ENCODE measurements at regions of chrX and their contacts with region 1.

Region 1: DNA sequence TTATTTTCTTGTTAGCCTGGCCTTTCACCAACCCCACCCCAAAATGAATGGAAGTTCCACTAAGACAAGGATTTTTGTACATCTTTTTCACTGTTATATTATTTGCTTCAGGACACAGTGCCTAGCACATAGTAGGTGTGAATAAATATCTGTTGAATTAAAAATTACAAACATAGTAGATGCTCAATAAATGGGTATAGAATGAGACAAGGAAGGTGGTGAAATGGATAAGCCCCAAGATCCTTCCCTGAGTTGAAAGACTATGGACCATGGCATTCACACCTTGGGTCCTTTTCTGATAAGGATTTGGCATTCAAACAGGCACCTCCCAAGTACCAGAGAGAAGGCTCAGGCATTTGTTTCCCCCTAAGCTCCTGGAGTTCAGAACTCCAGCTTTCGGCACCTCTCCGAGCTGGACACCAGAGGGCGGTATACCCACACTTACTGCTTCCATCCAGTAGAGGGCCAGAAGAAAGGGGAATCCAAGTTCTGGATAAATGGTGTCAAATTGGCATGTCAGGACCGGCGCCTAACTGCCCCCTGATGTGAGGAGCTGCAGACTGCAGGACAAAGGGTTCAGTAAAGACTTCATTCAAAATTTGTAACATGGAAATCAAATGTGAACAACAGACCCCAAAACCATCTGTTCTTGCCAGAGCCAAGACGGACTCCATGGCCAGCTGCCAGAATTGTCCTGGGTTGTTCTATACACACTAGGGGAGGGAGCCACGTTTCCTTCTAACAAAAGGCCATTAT is 193.0 kb downstream of the GPC3 start:
- DNase-seq: no peak
- H3K4me3 ChIP-seq: peak overlapping the region; percentile 16; the same call in 1 of the 2 replicates
- H3K27me3 ChIP-seq: no peaks in the 10 kb centered on the region
- CTCF ChIP-seq: peak; percentile 97

Region 2: DNA sequence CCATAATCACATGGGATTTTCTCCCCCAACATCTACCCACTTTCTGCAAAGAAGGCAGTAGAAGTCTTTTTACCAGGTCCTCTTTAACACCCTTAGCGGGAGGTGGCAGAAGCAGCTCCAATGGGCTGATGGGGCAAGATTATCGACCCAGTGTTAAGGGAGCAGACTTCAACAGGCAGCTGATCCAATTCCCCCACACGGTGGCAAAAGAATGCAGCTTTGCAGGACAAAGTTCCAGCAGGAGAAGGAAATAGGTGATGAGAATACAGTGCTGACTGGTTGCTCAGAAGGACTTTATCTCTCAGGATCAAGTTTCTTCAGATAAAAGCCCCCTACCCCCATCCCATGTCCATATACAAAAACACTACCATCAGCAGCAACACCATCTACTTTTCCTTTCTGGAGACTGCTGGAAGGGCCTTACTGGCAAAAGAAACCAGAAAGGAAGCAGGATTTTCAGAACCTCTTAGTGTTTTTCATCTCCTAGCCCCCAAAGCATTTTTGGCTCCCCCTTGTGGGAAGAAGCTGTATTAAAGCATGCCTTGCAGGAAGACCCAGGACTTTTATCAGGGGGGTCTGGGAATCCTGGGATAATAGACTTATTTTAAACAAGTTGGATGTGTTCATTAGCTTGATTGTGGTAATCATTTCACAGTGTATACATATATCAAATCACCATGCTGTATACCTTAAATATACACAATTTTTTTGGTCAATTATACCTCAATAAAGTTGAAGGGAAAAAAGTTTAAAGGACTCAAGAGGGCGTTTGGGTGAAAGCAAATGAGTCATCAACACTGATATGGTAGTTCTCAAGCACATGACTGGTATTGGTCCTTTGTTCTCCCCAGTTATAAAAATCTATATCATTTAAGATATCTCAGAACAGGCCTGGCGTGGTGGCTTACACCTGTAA is 46.6 kb after region 1 on chrX:
- CTCF ChIA-PET with region 1: interaction called, 11 read pairs
- POLR2A ChIA-PET with region 1: no interaction called
- DNase-seq: no peak
- H3K4me3 ChIP-seq: no peak overlapping the region
- H3K27me3 ChIP-seq: no peaks in the 10 kb centered on the region
- CTCF ChIP-seq: peak; percentile 56

Region 3: GRCh38 chrX:134026565-134027311 is 234.4 kb after region 1 on chrX:
- CTCF ChIA-PET with region 1: interaction called, 12 read pairs
- POLR2A ChIA-PET with region 1: no interaction called
- DNase-seq: no peak
- H3K4me3 ChIP-seq: no peak overlapping the region
- H3K27me3 ChIP-seq: no peaks in the 10 kb centered on the region
- CTCF ChIP-seq: peak; percentile 48